ENCODE measurements at regions of chr4 and their contacts with region 1.

Region 1: GRCh38 chr4:71713611-71714203 is 70.2 kb downstream of the GC start:
- DNase-seq: peak; percentile 79
- ATAC-seq: no peak; the same call in 1 of the 2 replicates
- H3K4me3 ChIP-seq: no peak overlapping the region
- H3K27ac ChIP-seq: no peak overlapping the region
- H3K4me1 ChIP-seq: peaks cover 19% of the 10 kb centered on the region; the same call in 1 of the 2 replicates
- H3K27me3 ChIP-seq: no peaks in the 10 kb centered on the region
- CTCF ChIP-seq: peak; percentile 91

Region 2: GRCh38 chr4:70839589-70840093 is 874.1 kb before region 1 on chr4 and contains the start of gene GRSF1:
- CTCF ChIA-PET with region 1: no interaction called
- POLR2A ChIA-PET with region 1: interaction called, 3 read pairs
- intact Hi-C with region 1: loop called (anchors 5 kb)
- DNase-seq: peak; percentile 94
- ATAC-seq: peak; percentile 83
- H3K4me3 ChIP-seq: peak within 1 kb of the TSS; percentile 96
- H3K27ac ChIP-seq: peak within 1 kb of the TSS; percentile 39
- H3K4me1 ChIP-seq: peaks cover 9% of the 10 kb centered on the region
- H3K27me3 ChIP-seq: no peaks in the 10 kb centered on the region
- CTCF ChIP-seq: no peak
- total RNA-seq, gene GRSF1: 102 and 103 TPM in 2 replicates

Region 3: GRCh38 chr4:71130827-71131603 is 582.7 kb before region 1 on chr4:
- CTCF ChIA-PET with region 1: no interaction called
- POLR2A ChIA-PET with region 1: no interaction called
- intact Hi-C with region 1: loop called (anchors 5 kb)
- DNase-seq: peak; percentile 61
- ATAC-seq: peak; percentile 75
- H3K4me3 ChIP-seq: peak overlapping the region; percentile 39; the same call in 1 of the 2 replicates
- H3K27ac ChIP-seq: peak overlapping the region; percentile 18
- H3K4me1 ChIP-seq: peaks cover 34% of the 10 kb centered on the region
- H3K27me3 ChIP-seq: no peaks in the 10 kb centered on the region
- CTCF ChIP-seq: peak; percentile 62

Region 4: GRCh38 chr4:71229477-71230270 is 484.0 kb before region 1 on chr4:
- CTCF ChIA-PET with region 1: no interaction called
- POLR2A ChIA-PET with region 1: no interaction called
- intact Hi-C with region 1: loop called (anchors 1 kb)
- DNase-seq: peak; percentile 70
- ATAC-seq: peak; percentile 88
- H3K4me3 ChIP-seq: peak overlapping the region; percentile 53
- H3K27ac ChIP-seq: no peak overlapping the region
- H3K4me1 ChIP-seq: peaks cover 6% of the 10 kb centered on the region; the same call in 1 of the 2 replicates
- H3K27me3 ChIP-seq: no peaks in the 10 kb centered on the region
- CTCF ChIP-seq: peak; percentile 90

Region 5: DNA sequence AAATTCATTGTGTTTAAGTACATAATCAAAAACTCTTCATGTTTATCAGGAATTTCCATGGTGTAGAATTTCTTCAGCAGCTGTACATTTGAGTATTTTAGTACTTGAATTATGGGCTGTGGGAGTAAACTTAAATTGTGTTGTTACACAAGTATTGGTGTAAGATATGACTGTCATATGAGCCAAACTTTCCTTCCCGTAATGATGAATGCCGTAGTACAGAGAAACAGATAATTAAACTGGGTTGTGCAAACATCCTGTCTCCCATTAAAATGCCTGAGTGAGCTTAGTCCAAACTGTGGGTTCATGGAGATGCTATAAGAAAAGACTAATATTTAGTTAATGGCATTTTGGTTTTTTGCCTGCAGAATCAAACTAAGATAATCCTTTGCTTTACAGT is 215.7 kb before region 1 on chr4:
- CTCF ChIA-PET with region 1: no interaction called
- POLR2A ChIA-PET with region 1: no interaction called
- intact Hi-C with region 1: loop called (anchors 1 kb)
- DNase-seq: peak; percentile 78
- ATAC-seq: peak; percentile 95
- H3K4me3 ChIP-seq: no peak overlapping the region
- H3K27ac ChIP-seq: peak overlapping the region; percentile 11
- H3K4me1 ChIP-seq: peaks cover 17% of the 10 kb centered on the region
- H3K27me3 ChIP-seq: no peaks in the 10 kb centered on the region
- CTCF ChIP-seq: no peak

Region 6: DNA sequence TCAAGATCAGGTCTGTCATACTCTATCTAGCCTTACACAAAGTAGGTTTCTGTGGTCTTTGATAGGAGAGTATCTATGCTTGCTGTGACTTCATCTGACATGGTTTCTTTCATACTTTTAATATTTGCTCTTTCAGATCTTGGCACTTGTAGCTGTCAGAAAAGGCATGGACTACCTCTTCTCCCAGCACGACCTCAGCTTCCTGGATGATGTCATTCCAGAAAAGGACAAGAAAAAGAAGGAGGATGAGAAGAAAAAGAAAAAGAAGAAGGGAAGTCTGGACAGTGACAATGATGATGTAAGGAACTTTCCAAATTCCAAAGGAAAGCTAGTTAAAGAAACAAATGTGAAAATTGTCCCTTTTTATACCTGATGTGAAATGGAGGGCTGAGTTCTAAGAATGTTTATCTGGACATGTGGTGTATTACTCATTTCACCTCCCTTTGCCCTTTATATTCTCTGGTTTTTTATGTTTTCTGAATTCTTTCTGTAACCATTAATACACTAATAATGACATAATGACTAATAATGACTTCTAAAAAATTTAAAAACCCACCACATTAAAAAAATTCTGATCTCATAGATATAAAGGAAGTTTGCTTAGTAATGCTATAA is 153.6 kb before region 1 on chr4:
- CTCF ChIA-PET with region 1: no interaction called
- POLR2A ChIA-PET with region 1: no interaction called
- intact Hi-C with region 1: loop called (anchors 2 kb)
- DNase-seq: peak; percentile 85
- ATAC-seq: peak; percentile 85
- H3K4me3 ChIP-seq: no peak overlapping the region
- H3K27ac ChIP-seq: peak overlapping the region; percentile 93
- H3K4me1 ChIP-seq: peaks cover 37% of the 10 kb centered on the region
- H3K27me3 ChIP-seq: no peaks in the 10 kb centered on the region
- CTCF ChIP-seq: no peak